ENCODE measurements at regions of chr11 and their contacts with region 1.

Region 1: GRCh38 chr11:122108192-122108799 is 7.7 kb downstream of the BLID start:
- DNase-seq: peak; percentile 45
- H3K4me3 ChIP-seq: no peak overlapping the region
- H3K27ac ChIP-seq: no peak overlapping the region
- H3K4me1 ChIP-seq: no peaks in the 10 kb centered on the region
- H3K27me3 ChIP-seq: no peaks in the 10 kb centered on the region
- CTCF ChIP-seq: peak; percentile 45

Region 2: DNA sequence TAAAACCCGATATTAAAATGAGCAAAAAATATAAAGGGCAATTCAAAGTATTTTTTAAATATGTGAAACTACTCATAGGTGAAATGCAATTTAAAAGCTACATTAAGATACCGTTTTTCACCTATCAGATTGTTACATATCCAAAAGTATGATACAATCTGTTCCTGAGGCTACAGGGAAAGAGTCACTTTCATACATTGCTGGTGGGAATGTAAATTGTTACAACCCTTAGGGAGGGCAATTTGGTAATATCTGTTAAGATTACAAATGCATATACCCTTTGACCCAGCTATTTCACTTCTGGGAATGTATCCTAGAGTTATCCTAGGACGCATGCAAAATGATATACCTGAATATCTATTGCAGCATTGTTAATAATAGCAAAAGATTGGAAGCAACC is 124.4 kb before region 1 on chr11:
- intact Hi-C with region 1: no loop called
- DNase-seq: no peak
- H3K4me3 ChIP-seq: no peak overlapping the region
- H3K27ac ChIP-seq: no peak overlapping the region
- H3K4me1 ChIP-seq: no peaks in the 10 kb centered on the region
- H3K27me3 ChIP-seq: no peaks in the 10 kb centered on the region
- CTCF ChIP-seq: no peak

Region 3: DNA sequence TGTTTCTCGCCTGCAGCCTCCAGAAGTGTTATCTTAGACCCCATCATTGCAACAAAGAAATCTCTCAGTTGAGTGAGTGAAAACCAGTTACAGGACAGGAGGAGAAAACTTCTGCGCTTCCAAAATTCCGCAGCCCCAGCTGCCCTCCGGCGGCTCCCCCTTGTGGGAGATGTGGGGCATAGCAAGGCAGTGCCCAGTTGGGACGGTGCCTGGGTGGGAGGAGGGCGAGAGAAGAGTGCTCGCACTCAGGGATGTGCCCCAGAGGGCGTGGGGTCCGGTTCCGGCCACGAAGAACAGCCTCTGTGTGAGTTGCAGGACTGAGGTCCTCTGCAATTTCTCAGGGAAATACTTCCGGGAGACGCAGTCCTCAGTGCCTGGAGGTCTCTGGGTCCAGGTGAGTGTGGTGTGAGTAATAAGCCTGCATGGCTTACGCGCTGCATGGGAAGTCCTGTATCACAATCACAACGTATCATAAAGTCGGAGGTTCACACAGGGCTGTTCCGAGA is 94.7 kb after region 1 on chr11:
- intact Hi-C with region 1: loop called (anchors 5 kb)
- DNase-seq: peak; percentile 51
- H3K4me3 ChIP-seq: no peak overlapping the region
- H3K27ac ChIP-seq: no peak overlapping the region
- H3K4me1 ChIP-seq: peaks cover 7% of the 10 kb centered on the region
- H3K27me3 ChIP-seq: no peaks in the 10 kb centered on the region
- CTCF ChIP-seq: peak; percentile 92